Activated CD8-positive, alpha-beta T cell treated with anti-CD3 and anti-CD28 coated beads for 36 hours (primary cell): ENCODE measurements at regions of chr7 and their contacts with region 1.

Region 1: DNA sequence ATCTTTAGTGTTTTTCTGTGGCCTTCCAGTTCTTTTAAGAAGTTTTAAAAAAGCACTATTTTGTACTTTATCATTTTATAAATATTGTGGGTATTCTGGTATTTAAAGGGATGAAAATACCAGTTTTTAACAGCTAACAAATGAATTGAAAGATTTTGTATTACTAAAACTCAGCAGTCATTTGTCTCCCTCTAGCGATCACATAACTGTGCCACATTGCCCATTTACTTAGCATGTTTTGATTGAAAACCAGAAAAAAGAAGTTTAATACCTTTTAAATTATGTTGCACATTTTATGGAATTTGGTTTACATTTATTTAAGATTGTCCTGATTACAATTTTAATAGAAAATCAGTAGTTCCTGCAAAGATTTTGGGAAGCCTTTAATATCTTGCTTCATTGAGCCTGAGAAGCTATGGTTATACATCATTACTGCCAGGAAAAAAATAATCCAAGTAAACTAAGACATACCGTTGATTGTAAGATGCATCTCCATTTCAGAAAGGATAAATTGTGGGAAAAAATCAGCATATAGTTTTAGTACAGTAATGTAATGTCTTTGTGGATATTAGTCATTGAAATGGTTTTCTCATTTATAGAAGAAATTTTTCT is 34.9 kb downstream of the TAX1BP1 start:
- DNase-seq: no peak
- ATAC-seq: no peak
- H3K4me3 Mint-ChIP-seq: no peak overlapping the region
- H3K27ac Mint-ChIP-seq: no peak overlapping the region
- H3K4me1 Mint-ChIP-seq: peaks cover 28% of the 10 kb centered on the region
- H3K27me3 Mint-ChIP-seq: no peaks in the 10 kb centered on the region
- CTCF ChIP-seq: peak; percentile 42

Region 2: DNA sequence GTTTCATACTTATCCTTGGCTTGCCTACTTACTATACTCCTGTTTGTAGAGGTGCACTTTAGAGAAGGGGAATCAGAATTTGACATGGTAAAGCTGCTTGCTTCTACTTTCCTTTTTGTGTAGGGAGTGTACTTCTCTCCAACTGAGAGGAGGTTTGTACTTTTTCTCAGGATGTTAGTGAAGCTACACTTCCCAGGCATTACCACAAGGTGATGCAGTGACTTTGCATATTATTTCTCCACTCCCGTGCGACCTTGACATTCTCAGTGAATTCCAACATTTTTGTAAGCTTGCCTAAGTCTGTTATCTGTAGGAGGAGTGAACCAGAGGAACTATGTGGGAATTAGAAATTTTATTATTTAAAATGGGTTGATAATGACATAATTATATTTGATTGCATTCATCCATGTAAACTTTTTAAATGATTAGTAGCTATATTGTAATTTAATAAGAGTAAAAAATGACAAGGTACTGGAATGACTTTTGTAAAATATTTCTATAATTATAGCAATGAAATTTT is 29.7 kb before region 1 on chr7:
- CTCF ChIA-PET with region 1: interaction called, 21 read pairs
- POLR2A ChIA-PET with region 1: interaction called, 3 read pairs
- intact Hi-C with region 1: no loop called
- DNase-seq: no peak
- ATAC-seq: no peak
- H3K4me3 Mint-ChIP-seq: no peak overlapping the region
- H3K27ac Mint-ChIP-seq: no peak overlapping the region
- H3K4me1 Mint-ChIP-seq: peaks cover 47% of the 10 kb centered on the region
- H3K27me3 Mint-ChIP-seq: no peaks in the 10 kb centered on the region
- CTCF ChIP-seq: peak; percentile 56